CD4-positive, alpha-beta T cell (primary cell): ENCODE measurements at regions of chr13 and their contacts with region 1.

Region 1: GRCh38 chr13:51452361-51453206 is at the start of gene INTS6:
- DNase-seq: peak; percentile 73 to 100 (median 99)
- ATAC-seq: peak; percentile 83
- H3K4me3 ChIP-seq: peak within 1 kb of the TSS; percentile 88
- H3K4me3 Mint-ChIP-seq: peak within 1 kb of the TSS; percentile 96
- H3K27ac ChIP-seq: peak within 1 kb of the TSS; percentile 88 to 97
- H3K27ac Mint-ChIP-seq: peak within 1 kb of the TSS; percentile 95
- H3K4me1 ChIP-seq: peaks cover 30% of the 10 kb centered on the region
- H3K4me1 Mint-ChIP-seq: peaks cover 59% of the 10 kb centered on the region
- H3K27me3 ChIP-seq: no peaks in the 10 kb centered on the region
- H3K27me3 Mint-ChIP-seq: no peaks in the 10 kb centered on the region
- CTCF ChIP-seq: no peak
- total RNA-seq, gene INTS6: 40.8 to 45.8 TPM

Region 2: GRCh38 chr13:50123862-50124536 is 1328.6 kb before region 1 on chr13:
- CTCF ChIA-PET with region 1: no interaction called
- POLR2A ChIA-PET with region 1: interaction called, 20 read pairs
- intact Hi-C with region 1: no loop called
- DNase-seq: peak; percentile 44 to 93 (median 64)
- ATAC-seq: peak; percentile 64
- H3K4me3 ChIP-seq: peak overlapping the region; percentile 90
- H3K4me3 Mint-ChIP-seq: peak overlapping the region; percentile 93
- H3K27ac ChIP-seq: peak overlapping the region; percentile 88 to 98
- H3K27ac Mint-ChIP-seq: peak overlapping the region; percentile 94
- H3K4me1 ChIP-seq: peaks cover 44% of the 10 kb centered on the region
- H3K4me1 Mint-ChIP-seq: peaks cover 58% of the 10 kb centered on the region
- H3K27me3 ChIP-seq: peaks cover 13 to 14% of the 10 kb centered on the region in 2 experiments
- H3K27me3 Mint-ChIP-seq: peaks cover 23% of the 10 kb centered on the region
- CTCF ChIP-seq: no peak

Region 3: DNA sequence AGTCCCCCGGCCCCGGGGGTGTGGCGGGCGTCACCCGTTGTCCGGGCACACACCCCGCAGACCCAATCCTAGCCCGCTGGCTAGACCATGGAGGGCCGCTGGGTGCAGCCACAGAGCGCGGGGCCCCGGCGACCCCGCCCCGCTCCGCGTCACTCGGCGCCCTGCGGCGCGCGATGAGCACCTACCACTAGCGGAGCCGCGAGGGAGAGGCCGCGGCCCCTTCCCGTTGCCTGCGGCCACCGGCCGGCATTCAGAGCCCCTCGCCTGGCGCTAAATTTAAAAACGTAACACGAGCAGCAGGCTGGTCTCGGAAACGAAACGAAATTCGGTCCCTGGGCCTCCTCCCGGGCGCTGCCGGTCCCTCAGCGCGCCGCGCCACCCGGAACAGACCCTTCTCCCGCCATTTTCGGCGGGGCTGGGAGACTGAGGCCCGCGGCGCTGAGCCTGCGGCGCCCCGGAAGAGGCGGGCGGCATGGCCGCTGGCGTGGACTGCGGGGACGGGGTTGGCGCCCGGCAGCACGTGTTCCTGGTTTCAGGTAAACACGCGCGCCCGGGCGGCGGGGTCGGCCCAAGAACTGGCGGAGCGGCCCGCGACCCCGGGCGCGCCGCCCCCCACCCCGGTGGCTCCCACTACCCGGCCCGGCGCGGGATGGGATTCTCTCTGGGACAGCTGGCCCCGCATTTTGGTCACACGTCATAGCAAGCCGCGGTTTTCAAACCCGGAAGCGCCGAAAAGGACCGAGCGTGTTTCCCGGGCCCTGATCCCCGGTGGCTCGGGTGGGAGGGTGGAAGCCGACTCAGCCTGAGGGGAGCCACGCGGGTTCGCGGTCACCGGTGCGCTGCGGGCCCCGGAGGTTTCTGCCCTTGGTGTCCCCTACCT is 542.7 kb before region 1 on chr13 and contains the start of gene RNASEH2B:
- CTCF ChIA-PET with region 1: no interaction called
- POLR2A ChIA-PET with region 1: no interaction called
- intact Hi-C with region 1: no loop called
- DNase-seq: peak; percentile 40 to 88 (median 60)
- ATAC-seq: peak; percentile 71
- H3K4me3 ChIP-seq: peak within 1 kb of the TSS; percentile 94
- H3K4me3 Mint-ChIP-seq: peak within 1 kb of the TSS; percentile 90
- H3K27ac ChIP-seq: peak within 1 kb of the TSS; percentile 93 to 96
- H3K27ac Mint-ChIP-seq: peak within 1 kb of the TSS; percentile 93
- H3K4me1 ChIP-seq: peaks cover 25% of the 10 kb centered on the region
- H3K4me1 Mint-ChIP-seq: peaks cover 37% of the 10 kb centered on the region
- H3K27me3 ChIP-seq: no peaks in the 10 kb centered on the region
- H3K27me3 Mint-ChIP-seq: no peaks in the 10 kb centered on the region
- CTCF ChIP-seq: no peak
- total RNA-seq, gene RNASEH2B: 68.4 to 74.6 TPM

Region 4: GRCh38 chr13:51465124-51465523 is 12.5 kb after region 1 on chr13:
- CTCF ChIA-PET with region 1: interaction called, 9 read pairs
- POLR2A ChIA-PET with region 1: interaction called, 16 read pairs
- intact Hi-C with region 1: no loop called
- DNase-seq: no peak
- ATAC-seq: no peak
- H3K4me3 ChIP-seq: no peak overlapping the region
- H3K4me3 Mint-ChIP-seq: no peak overlapping the region
- H3K27ac ChIP-seq: no peak overlapping the region
- H3K27ac Mint-ChIP-seq: no peak overlapping the region
- H3K4me1 ChIP-seq: no peaks in the 10 kb centered on the region
- H3K4me1 Mint-ChIP-seq: no peaks in the 10 kb centered on the region
- H3K27me3 ChIP-seq: no peaks in the 10 kb centered on the region
- H3K27me3 Mint-ChIP-seq: no peaks in the 10 kb centered on the region
- CTCF ChIP-seq: no peak

Region 5: DNA sequence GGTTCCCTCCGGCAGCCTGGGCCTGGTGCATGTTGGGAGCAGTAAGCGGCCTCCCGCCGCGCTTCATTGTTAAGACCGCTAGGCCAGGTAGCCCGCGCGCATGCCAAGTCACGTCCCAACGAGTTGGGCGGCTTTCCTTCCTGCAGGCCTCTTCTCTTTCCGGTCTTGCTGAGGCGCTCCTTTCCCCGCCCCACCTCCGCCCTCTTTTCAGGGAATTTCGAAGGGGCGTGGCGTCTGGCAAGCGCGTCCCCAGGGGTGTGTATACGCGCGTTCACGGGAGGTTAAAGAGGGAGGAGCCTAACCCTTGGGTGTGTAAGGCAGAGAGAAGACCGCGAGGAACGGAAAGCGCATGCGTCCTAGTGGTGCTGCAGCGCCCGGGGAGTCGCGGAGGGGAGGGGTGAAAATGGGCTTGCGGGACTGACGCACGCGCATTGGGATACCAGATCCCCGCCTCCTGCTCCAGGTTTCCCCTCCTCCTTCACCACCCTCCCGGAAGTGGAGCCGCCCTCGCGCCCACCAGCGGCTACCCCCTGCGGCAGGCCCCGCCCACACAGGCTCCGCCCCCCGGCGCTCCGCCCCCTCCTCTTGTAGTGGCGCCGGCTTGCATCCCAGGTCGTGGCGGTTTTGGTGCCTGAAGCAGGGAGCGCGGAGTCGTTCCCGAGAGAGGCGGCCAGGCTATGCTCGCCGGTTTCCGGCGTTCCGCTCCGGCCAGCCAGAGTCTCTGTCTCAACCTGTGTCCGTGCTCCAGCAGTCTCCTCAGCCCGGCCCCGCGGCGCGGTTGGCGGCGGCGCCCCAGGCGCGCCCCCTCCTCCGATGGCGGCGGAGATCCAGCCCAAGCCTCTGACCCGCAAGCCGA is 131.5 kb after region 1 on chr13 and contains the start of gene WDFY2:
- CTCF ChIA-PET with region 1: interaction called, 4 read pairs
- POLR2A ChIA-PET with region 1: interaction called, 216 read pairs
- intact Hi-C with region 1: loop called (anchors 1 kb)
- DNase-seq: peak; percentile 98 to 100 (median 99)
- ATAC-seq: peak; percentile 82
- H3K4me3 ChIP-seq: peak within 1 kb of the TSS; percentile 67
- H3K4me3 Mint-ChIP-seq: peak within 1 kb of the TSS; percentile 97
- H3K27ac ChIP-seq: peak within 1 kb of the TSS; percentile 88 to 90
- H3K27ac Mint-ChIP-seq: peak within 1 kb of the TSS; percentile 96
- H3K4me1 ChIP-seq: peaks cover 15% of the 10 kb centered on the region
- H3K4me1 Mint-ChIP-seq: peaks cover 41% of the 10 kb centered on the region
- H3K27me3 ChIP-seq: no peaks in the 10 kb centered on the region
- H3K27me3 Mint-ChIP-seq: no peaks in the 10 kb centered on the region
- CTCF ChIP-seq: no peak
- total RNA-seq, gene WDFY2: 21.4 to 21.9 TPM

Region 6: GRCh38 chr13:51764184-51765141 is 311.9 kb after region 1 on chr13:
- CTCF ChIA-PET with region 1: no interaction called
- POLR2A ChIA-PET with region 1: interaction called, 30 read pairs
- intact Hi-C with region 1: no loop called
- DNase-seq: peak; percentile 19 to 86 (median 34)
- ATAC-seq: peak; percentile 85
- H3K4me3 ChIP-seq: peak overlapping the region; percentile 49
- H3K4me3 Mint-ChIP-seq: peak overlapping the region; percentile 68
- H3K27ac ChIP-seq: peak overlapping the region; percentile 67 to 73
- H3K27ac Mint-ChIP-seq: peak overlapping the region; percentile 85
- H3K4me1 ChIP-seq: peaks cover 18% of the 10 kb centered on the region
- H3K4me1 Mint-ChIP-seq: peaks cover 23% of the 10 kb centered on the region
- H3K27me3 ChIP-seq: no peaks in the 10 kb centered on the region
- H3K27me3 Mint-ChIP-seq: no peaks in the 10 kb centered on the region
- CTCF ChIP-seq: no peak

Region 7: GRCh38 chr13:51825165-51825592 is 372.6 kb after region 1 on chr13:
- CTCF ChIA-PET with region 1: no interaction called
- POLR2A ChIA-PET with region 1: interaction called, 153 read pairs
- intact Hi-C with region 1: loop called in 1 of 2 experiments (anchors 2 kb)
- DNase-seq: peak in 4 of 14 experiments; percentile 39 to 85 (median 76)
- ATAC-seq: peak; percentile 58
- H3K4me3 ChIP-seq: peak overlapping the region; percentile 54
- H3K4me3 Mint-ChIP-seq: peak overlapping the region; percentile 86
- H3K27ac ChIP-seq: peak overlapping the region; percentile 76 to 79
- H3K27ac Mint-ChIP-seq: peak overlapping the region; percentile 89
- H3K4me1 ChIP-seq: peaks cover 78% of the 10 kb centered on the region
- H3K4me1 Mint-ChIP-seq: peaks cover 88% of the 10 kb centered on the region
- H3K27me3 ChIP-seq: no peaks in the 10 kb centered on the region
- H3K27me3 Mint-ChIP-seq: no peaks in the 10 kb centered on the region
- CTCF ChIP-seq: no peak

Region 8: GRCh38 chr13:52652196-52652979 is 1199.8 kb after region 1 on chr13 and contains the start of gene SUGT1:
- CTCF ChIA-PET with region 1: no interaction called
- POLR2A ChIA-PET with region 1: interaction called, 11 read pairs
- intact Hi-C with region 1: no loop called
- DNase-seq: peak; percentile 88 to 98 (median 94)
- ATAC-seq: peak; percentile 91
- H3K4me3 ChIP-seq: peak within 1 kb of the TSS; percentile 85
- H3K4me3 Mint-ChIP-seq: no peak within 1 kb of the TSS
- H3K27ac ChIP-seq: peak within 1 kb of the TSS; percentile 93 to 97
- H3K27ac Mint-ChIP-seq: no peak within 1 kb of the TSS
- H3K4me1 ChIP-seq: peaks cover 26% of the 10 kb centered on the region
- H3K4me1 Mint-ChIP-seq: peaks cover 12% of the 10 kb centered on the region
- H3K27me3 ChIP-seq: no peaks in the 10 kb centered on the region
- H3K27me3 Mint-ChIP-seq: no peaks in the 10 kb centered on the region
- CTCF ChIP-seq: peak; percentile 58
- total RNA-seq, gene SUGT1: 18.5 to 20.1 TPM